ENCODE measurements at regions of chr17 and their contacts with region 1.

Region 1: DNA sequence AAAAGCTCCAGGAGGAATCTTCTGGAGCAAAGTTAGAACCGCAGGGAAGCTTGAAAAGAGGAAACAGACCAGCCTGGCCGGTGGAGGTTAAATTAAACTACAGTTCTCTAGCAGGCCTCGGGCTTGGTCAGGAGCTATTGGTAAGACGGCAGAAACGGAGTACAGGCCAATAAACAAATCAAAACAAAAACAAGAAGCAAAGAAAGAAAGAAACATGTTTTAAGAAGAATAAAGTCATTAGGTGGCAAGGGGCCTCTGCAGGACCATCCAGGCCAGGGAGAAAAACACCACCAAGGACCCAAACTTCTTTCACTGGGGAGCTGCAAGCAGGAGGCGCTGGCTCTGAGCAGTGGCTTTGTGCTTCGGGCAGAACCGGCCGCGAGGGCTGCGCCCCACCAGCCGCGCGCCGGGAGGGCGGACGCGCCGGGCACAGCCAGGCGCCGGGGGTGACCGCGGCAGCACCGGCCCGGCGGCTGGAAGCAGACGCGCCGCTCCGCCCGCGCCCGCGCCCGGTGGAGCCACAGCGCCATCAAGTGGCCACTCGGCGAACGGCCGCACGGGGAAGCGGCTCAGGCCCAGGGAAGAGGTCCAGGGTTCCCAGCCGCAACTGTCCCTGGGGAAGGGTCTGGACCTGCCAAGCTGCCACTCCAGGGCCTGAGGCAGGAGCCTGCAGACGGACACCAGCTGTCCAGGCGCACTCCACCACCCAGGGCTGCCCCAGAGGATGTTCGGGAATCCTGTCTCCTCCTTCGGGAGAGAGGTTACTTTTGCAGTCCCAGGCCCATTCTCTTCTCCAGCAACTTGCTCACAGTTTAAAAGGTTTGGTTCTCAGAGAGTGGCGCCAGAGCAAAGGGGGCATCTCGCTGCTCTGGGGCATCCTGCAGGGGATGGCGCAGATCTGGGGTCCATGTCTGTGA is 419.4 kb downstream of the SOX9 start:
- DNase-seq: peak; percentile 56

Region 2: GRCh38 chr17:71438631-71439146 is 1101.5 kb before region 1 on chr17:
- in situ Hi-C with region 1: loop called (anchors 25 kb)
- DNase-seq: peak; percentile 97

Region 3: GRCh38 chr17:72631949-72632684 is 91.9 kb after region 1 on chr17:
- in situ Hi-C with region 1: no loop called
- DNase-seq: peak; percentile 85

Region 4: DNA sequence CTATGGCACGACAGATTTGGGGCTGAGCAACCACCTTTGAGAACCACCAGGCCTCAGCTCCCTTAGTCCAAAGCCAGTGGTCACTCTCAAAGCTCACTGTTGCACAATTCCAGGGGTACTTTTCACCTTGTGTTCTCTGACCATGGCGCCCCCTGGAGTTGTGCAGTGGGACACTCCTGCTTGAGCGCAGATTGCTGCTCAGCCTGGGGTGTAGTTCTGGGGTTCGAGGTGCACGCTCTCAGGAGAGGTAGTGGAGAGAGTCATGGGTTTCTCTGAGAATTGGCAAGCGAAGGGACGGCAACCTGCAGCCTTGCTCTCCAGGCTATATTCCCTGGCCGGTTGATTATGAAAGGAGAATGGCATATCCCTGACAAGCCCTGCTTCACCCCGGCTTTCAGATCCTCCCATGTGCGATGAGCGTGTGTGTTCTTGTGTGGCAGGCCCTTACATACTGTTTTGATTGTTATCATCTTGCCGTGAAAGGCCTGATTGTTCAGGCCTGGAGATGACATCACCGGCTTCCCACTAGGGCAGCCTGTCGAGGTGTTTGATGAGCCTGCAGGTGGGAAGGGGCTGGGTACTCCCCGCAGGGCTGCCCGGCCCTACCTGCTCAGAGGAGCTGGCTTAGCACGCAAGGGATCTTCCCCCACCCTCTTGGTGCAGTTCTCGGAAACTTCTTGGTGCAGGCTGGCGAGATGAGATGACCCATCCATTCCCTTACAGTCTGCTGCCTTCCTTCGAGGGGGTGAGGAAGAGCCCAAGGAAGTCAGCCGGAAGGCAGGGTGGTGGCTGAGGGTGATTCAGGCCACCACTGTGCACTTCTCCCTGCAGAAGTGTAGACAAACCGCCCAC is 121.1 kb after region 1 on chr17:
- in situ Hi-C with region 1: no loop called
- DNase-seq: peak; percentile 54

Measured in Caki2 (cell line).